ENCODE measurements at regions of chr14 and their contacts with region 1.

Region 1: GRCh38 chr14:77320238-77320935 is at the start of gene POMT2:
- DNase-seq: peak; percentile 95
- H3K4me3 Mint-ChIP-seq: peak within 1 kb of the TSS; percentile 93
- H3K27ac Mint-ChIP-seq: peak within 1 kb of the TSS; percentile 99
- H3K4me1 Mint-ChIP-seq: peaks cover 17% of the 10 kb centered on the region
- H3K27me3 Mint-ChIP-seq: no peaks in the 10 kb centered on the region
- total RNA-seq, gene POMT2: 12.9 to 13.1 TPM

Region 2: GRCh38 chr14:77203611-77204477 is 116.5 kb before region 1 on chr14:
- CTCF ChIA-PET with region 1: no interaction called
- POLR2A ChIA-PET with region 1: no interaction called
- intact Hi-C with region 1: no loop called
- DNase-seq: no peak
- H3K4me3 Mint-ChIP-seq: no peak overlapping the region
- H3K27ac Mint-ChIP-seq: no peak overlapping the region
- H3K4me1 Mint-ChIP-seq: no peaks in the 10 kb centered on the region
- H3K27me3 Mint-ChIP-seq: peaks cover 3% of the 10 kb centered on the region

Region 3: DNA sequence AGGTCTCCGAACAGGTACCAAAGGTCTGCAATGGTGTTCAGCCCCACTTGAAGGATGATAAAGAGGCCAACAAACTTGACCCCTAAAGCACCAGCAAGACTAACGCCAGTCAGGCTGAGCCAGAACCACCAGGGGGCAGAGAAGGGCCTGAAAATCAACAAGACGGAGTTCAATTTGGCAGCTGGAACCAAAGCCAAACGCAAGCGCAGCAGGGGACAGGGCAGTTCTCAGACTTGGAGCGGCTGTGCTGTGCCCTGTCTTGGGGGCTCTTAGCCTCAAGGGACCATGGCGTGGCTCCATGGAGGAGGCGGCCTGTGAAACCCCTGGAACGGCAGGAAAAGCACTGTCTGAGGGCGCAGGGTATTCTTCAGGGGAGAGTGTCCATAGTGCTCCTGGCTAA is 19.3 kb before region 1 on chr14:
- CTCF ChIA-PET with region 1: interaction called, 321 read pairs
- POLR2A ChIA-PET with region 1: interaction called, 30 read pairs
- intact Hi-C with region 1: loop called (anchors 1 kb)
- DNase-seq: peak; percentile 78
- H3K4me3 Mint-ChIP-seq: no peak overlapping the region
- H3K27ac Mint-ChIP-seq: no peak overlapping the region
- H3K4me1 Mint-ChIP-seq: peaks cover 24% of the 10 kb centered on the region
- H3K27me3 Mint-ChIP-seq: no peaks in the 10 kb centered on the region

Region 4: GRCh38 chr14:77616454-77617229 is 296.3 kb after region 1 on chr14 and contains the start of gene SPTLC2:
- CTCF ChIA-PET with region 1: no interaction called
- POLR2A ChIA-PET with region 1: no interaction called
- intact Hi-C with region 1: loop called (anchors 2 kb)
- DNase-seq: peak; percentile 98
- H3K4me3 Mint-ChIP-seq: peak within 1 kb of the TSS; percentile 89
- H3K27ac Mint-ChIP-seq: peak within 1 kb of the TSS; percentile 86
- H3K4me1 Mint-ChIP-seq: peaks cover 31% of the 10 kb centered on the region
- H3K27me3 Mint-ChIP-seq: no peaks in the 10 kb centered on the region
- total RNA-seq, gene SPTLC2: 23.6 to 23.9 TPM

Region 5: DNA sequence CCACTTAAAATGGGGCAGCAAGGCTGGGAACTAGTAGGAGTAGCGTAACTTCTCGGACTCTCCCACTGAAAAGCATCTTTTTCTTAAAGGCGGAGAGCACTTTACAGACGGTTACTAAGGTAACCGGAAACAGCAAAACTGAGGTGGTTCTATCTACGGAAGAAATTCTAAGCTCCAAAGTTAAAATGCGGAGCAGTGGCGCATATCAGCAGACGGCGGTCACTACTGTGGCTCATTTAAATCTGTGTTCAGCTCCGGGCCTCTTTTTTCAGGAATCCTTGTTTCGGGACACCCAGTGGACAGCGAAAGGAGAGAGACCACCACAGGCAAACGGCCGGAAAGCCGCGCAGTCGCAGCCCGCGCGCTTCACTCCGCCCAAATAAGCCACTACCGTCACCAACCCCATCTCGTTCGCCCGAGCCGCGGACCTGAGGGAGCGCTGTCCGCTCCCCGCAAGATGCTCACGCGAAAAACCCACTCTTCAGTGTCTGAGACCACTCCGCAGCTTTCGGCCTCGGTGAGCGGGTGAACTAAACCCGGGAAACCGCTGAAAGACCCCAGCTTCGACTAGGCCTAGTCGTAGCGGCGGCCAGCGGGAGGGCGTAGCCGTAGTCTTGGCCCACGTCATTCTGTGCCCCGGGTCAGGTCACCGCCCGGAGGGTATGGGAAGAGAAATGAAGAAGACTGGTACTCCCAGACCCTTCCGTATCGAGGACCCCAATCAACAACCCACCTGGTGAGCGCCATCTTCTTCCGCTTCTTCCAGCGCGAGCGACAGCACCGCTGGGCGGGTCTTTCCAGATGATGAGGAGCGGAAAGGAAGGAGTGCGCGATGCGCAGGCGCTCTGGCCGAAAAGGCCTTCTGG is 440.2 kb after region 1 on chr14 and contains the start of gene SNW1:
- CTCF ChIA-PET with region 1: no interaction called
- POLR2A ChIA-PET with region 1: no interaction called
- intact Hi-C with region 1: loop called (anchors 1 kb)
- DNase-seq: peak; percentile 95
- H3K4me3 Mint-ChIP-seq: peak within 1 kb of the TSS; percentile 95
- H3K27ac Mint-ChIP-seq: peak within 1 kb of the TSS; percentile 96
- H3K4me1 Mint-ChIP-seq: peaks cover 32% of the 10 kb centered on the region
- H3K27me3 Mint-ChIP-seq: no peaks in the 10 kb centered on the region
- total RNA-seq, gene SNW1: 115 to 120 TPM

Region 6: DNA sequence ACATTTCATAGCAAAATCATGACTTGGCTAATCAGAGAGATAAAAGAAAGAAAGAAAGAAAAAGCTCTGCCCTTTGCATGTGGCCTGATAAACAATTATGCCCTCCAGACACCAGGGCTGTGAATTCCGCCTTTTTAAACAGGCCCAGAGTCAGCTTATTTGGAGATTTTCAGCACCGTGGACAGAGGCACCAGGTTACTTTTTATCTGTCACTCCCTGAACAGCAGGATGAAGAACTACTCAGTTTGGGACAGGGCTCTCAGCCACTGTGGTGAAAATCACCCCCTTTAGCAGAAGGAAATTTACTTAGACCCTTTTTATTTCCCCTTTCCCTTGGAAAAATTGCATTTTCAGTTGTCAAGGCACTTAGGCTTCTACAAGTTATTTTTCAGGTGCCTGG is 1209.7 kb after region 1 on chr14:
- CTCF ChIA-PET with region 1: no interaction called
- POLR2A ChIA-PET with region 1: no interaction called
- intact Hi-C with region 1: no loop called
- DNase-seq: peak; percentile 15
- H3K4me3 Mint-ChIP-seq: no peak overlapping the region
- H3K27ac Mint-ChIP-seq: no peak overlapping the region
- H3K4me1 Mint-ChIP-seq: no peaks in the 10 kb centered on the region
- H3K27me3 Mint-ChIP-seq: no peaks in the 10 kb centered on the region